ENCODE measurements at regions of chr3 and their contacts with region 1.

Region 1: GRCh38 chr3:186432189-186432588 is 70.2 kb upstream of the DGKG start:
- H3K4me3 Mint-ChIP-seq: no peak overlapping the region
- H3K27ac Mint-ChIP-seq: no peak overlapping the region
- H3K4me1 Mint-ChIP-seq: no peaks in the 10 kb centered on the region
- H3K27me3 Mint-ChIP-seq: no peaks in the 10 kb centered on the region

Region 2: DNA sequence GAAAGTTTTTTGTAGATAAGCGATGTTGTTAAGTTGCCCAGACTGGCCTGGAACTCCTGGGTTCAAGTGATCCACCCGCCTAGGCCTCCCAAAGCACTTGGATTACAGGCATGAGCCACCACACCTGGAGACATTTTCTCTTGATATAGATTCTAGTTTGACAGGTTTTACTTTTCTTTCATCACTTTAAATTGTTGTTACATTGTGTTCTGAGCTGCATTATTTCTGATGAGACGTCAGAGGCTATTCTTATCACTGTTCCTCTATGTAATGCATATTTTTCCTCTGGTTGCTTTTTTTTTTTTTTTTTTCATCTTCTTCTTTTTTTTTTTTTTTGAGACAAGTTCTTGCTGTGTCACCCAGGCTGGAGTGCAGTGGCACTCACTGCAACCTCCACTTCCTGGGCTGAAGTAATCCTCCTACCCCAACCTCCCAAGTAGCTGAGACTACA is 535.6 kb before region 1 on chr3:
- intact Hi-C with region 1: loop called (anchors 10 kb)
- H3K4me3 Mint-ChIP-seq: no peak overlapping the region
- H3K27ac Mint-ChIP-seq: no peak overlapping the region
- H3K4me1 Mint-ChIP-seq: peaks cover 18% of the 10 kb centered on the region
- H3K27me3 Mint-ChIP-seq: no peaks in the 10 kb centered on the region

Region 3: GRCh38 chr3:186340204-186340603 is 92.0 kb before region 1 on chr3:
- intact Hi-C with region 1: no loop called
- H3K4me3 Mint-ChIP-seq: no peak overlapping the region
- H3K27ac Mint-ChIP-seq: no peak overlapping the region
- H3K4me1 Mint-ChIP-seq: peaks cover 44% of the 10 kb centered on the region
- H3K27me3 Mint-ChIP-seq: peaks cover 11% of the 10 kb centered on the region